OCI-LY7 (cell line): ENCODE measurements at regions of chr15 and their contacts with region 1.

Region 1: GRCh38 chr15:84588053-84588874 is 12.5 kb upstream of the ZSCAN2 start:
- DNase-seq: peak; percentile 88
- H3K4me3 ChIP-seq: peak overlapping the region; percentile 24
- H3K27ac ChIP-seq: no peak overlapping the region
- H3K4me1 ChIP-seq: peaks cover 2% of the 10 kb centered on the region
- CTCF ChIP-seq: peak; percentile 79

Region 2: DNA sequence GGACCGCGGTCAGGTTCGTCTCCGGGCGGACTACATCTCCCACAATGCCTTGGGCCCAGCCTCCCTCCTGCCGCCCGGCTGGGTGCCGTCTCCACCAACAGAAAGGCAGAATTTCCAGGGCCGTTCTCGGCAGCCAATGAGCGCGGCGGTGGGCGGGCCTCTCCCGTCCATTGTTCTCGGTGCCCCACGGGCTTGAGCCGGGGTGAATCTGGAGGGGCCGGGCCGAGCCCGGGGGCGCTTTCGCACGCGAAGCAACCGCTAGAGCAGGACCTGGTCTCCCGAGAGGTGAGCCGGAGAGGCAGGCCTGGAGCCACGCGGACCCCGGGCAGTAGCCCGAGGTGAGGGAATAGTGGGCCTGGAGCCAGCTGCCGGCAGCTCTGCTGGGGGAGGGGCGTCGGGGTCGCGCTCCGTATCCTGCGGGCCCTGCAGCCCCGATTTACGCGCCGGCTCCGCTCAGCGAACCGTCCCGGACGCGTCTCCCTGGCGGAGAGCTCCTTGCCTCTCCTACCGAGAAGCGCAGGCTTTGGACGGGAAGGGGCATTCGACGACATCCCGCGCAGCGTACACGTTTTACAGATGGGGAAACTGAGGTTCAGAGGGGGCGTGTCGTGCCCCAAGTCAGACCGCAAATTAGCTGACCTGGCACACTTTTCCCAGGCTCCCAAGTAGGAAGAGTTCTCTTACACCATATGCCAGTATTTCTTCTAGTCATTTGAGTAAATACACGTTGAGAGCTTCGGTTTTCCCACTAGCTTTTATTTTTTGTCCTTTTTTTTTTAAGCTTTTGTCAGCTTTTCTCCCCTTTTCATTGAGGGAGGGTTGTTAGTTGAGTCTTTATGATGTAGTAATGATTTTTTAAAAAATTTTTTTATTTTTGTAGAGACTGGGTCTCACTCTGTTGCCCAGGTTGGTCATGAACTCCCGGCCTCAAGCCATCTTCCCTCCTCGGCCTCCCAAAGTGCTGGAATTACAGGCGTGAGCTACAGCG is 12.9 kb after region 1 on chr15 and contains the start of gene ZSCAN2:
- CTCF ChIA-PET with region 1: interaction called, 12 read pairs
- POLR2A ChIA-PET with region 1: no interaction called
- intact Hi-C with region 1: no loop called
- DNase-seq: peak; percentile 93
- H3K4me3 ChIP-seq: peak within 1 kb of the TSS; percentile 83
- H3K27ac ChIP-seq: no peak within 1 kb of the TSS
- H3K4me1 ChIP-seq: peaks cover 47% of the 10 kb centered on the region
- CTCF ChIP-seq: no peak
- total RNA-seq, gene ZSCAN2: 12.4 and 21.7 TPM in 2 replicates

Region 3: DNA sequence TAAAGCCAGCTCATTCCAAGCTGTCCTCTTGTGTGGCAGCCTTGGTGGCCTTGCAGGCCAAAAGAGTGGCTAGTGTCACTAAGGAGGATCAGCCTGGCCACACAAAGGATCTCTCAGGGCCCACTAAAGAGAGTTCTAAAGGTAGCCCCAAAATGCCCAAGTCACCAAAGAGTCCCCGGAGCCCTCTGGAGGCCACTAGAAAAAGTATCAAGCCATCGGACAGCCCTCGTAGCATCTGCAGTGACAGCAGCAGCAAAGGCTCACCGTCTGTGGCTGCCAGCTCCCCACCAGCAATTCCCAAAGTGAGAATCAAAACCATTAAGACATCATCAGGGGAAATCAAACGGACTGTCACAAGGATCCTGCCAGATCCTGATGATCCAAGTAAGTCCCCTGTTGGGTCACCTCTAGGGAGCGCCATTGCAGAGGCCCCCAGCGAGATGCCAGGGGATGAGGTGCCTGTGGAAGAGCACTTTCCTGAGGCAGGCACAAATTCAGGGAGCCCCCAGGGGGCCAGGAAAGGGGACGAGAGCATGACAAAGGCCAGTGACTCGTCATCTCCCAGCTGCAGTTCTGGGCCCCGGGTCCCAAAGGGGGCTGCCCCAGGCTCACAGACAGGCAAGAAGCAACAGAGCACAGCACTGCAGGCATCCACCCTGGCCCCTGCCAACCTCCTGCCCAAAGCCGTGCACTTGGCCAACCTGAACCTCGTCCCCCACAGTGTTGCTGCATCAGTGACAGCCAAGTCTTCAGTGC is 195.4 kb after region 1 on chr15:
- CTCF ChIA-PET with region 1: no interaction called
- POLR2A ChIA-PET with region 1: no interaction called
- intact Hi-C with region 1: no loop called
- DNase-seq: no peak
- H3K4me3 ChIP-seq: no peak overlapping the region
- H3K27ac ChIP-seq: no peak overlapping the region
- H3K4me1 ChIP-seq: no peaks in the 10 kb centered on the region
- CTCF ChIP-seq: peak; percentile 40; the same call in 1 of the 2 replicates

Region 4: DNA sequence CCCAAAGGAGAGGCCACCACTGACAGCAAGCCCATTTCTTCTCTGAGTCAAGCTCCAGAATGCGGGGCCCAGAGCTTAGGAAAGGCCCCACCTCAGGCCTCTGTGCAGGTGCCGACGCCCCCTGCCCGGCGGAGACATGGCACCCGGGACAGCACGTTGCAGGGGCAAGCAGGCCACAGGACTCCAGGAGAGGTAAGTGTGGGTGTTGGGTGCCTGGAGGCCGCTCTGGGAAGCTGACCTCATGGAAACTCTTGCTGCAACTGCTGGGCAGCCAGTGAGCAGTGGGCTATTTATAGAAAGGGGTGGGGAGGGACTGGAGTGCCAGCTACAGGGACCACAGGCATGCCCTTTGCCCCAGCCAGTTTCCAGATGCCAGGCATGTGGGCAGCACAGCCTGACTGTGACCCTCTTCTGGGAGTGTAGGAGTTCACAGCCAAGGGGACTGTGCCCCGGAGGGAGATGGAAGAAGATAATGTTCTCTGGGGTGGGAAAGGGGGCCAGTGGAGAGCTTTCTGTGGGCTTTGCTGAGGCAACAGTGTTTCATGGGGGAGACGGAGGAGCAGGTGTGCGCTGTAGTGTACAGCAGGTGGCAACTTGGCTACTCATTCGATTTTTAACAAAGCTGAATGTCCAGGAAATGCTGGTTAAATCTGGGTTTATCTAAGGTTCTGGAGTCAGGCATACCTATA is 252.6 kb after region 1 on chr15:
- CTCF ChIA-PET with region 1: interaction called, 3 read pairs
- POLR2A ChIA-PET with region 1: no interaction called
- intact Hi-C with region 1: loop called (anchors 1 kb)
- DNase-seq: no peak
- H3K4me3 ChIP-seq: no peak overlapping the region
- H3K27ac ChIP-seq: no peak overlapping the region
- H3K4me1 ChIP-seq: no peaks in the 10 kb centered on the region
- CTCF ChIP-seq: no peak

Region 5: DNA sequence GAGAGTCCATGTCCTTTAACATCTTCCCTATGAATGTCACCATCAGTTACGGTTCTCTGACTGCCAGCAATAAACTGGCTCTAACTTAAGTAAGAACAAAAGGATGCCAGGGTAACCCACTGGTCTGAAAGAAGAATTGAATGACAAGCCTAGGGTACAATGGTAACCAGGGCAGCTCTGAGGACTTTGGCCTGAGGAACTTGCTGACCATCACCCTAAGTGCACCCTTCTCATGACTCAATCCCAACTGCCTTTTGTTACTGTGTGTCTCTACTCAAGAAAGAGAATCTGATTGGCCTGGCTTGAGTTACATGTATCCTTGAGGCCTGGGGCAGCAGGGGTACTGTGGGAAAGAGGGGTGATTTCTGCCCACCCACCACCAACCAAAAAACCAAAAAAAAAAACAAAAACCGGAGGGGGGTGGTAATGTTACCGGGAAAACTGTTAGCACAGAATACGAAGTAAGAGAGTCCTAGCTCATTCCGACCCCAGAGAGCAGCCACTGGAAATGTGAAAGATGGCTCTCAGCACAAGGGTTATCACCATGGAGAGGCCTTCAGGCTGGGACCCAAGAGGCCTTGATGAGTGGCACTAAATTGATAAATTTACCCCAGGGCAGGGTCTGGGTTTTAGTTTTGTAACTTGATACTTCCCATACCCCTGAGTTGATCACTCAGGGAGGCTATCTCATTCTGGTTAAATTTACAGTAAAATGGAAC is 286.9 kb after region 1 on chr15:
- CTCF ChIA-PET with region 1: no interaction called
- POLR2A ChIA-PET with region 1: interaction called, 3 read pairs
- intact Hi-C with region 1: loop called (anchors 2 kb)
- DNase-seq: no peak
- H3K4me3 ChIP-seq: no peak overlapping the region
- H3K27ac ChIP-seq: no peak overlapping the region
- H3K4me1 ChIP-seq: no peaks in the 10 kb centered on the region
- CTCF ChIP-seq: no peak

Region 6: DNA sequence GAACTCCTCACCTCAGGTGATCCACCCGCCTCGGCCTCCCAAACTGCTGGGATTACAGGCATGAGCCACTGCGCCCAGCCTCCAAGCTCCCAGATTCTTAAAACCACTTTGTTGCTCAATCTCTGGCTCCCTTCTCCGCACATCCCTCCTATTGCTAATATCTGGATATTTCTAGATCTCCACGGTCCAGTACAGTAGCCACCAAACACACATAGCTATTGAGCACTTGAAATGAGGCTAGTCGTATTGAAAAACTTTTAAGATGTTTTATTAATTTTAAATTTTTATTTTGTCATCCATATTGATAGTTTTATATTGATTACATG is 340.5 kb after region 1 on chr15:
- CTCF ChIA-PET with region 1: no interaction called
- POLR2A ChIA-PET with region 1: interaction called, 3 read pairs
- intact Hi-C with region 1: loop called (anchors 1 kb)
- DNase-seq: no peak
- H3K4me3 ChIP-seq: no peak overlapping the region
- H3K27ac ChIP-seq: no peak overlapping the region
- H3K4me1 ChIP-seq: peaks cover 5% of the 10 kb centered on the region
- CTCF ChIP-seq: no peak

Region 7: DNA sequence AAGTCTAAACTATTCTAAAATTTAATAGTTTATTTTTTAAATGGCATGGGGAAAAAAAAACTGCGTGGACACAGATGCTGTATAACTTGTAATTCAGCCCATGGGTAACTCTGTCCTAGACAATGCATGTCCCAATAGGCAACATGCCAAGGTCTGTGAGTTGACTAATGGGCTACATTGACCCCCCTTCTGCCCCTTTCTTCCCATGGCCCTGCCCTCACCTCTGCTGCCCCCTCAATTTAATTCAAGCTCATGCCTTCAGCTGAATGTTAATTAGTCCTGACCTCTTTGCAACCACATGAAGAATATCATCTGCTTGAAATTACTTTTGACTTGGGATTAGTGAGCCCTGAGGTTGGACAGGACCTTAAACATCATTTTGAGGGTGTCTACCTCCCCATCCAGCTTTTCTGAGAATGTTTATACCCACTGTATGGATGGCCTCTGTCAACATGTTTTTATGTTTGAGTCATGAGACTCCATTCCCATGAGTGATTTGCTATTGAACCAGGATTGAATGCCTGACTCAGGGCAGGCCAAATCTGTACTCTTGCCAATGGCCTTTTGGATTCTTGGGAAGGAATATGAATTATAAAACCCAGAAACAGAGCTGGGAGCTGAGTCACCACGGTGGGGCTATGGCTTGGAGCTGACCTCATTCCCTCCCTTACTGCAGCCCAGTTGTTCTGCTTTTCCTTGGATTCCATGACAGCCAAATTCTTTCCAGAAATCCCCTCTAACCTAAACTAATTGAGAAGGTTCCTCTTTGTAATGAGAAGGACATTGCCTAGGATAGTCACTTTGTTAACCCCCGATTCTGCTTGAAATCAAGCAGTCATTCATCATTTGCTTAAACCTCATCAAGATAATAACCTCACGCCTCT is 359.9 kb after region 1 on chr15:
- CTCF ChIA-PET with region 1: no interaction called
- POLR2A ChIA-PET with region 1: no interaction called
- intact Hi-C with region 1: no loop called
- DNase-seq: no peak
- H3K4me3 ChIP-seq: no peak overlapping the region
- H3K27ac ChIP-seq: no peak overlapping the region
- H3K4me1 ChIP-seq: no peaks in the 10 kb centered on the region
- CTCF ChIP-seq: no peak

Region 8: GRCh38 chr15:85044251-85044853 is 456.1 kb after region 1 on chr15:
- CTCF ChIA-PET with region 1: no interaction called
- POLR2A ChIA-PET with region 1: no interaction called
- intact Hi-C with region 1: loop called (anchors 5 kb)
- DNase-seq: peak; percentile 48
- H3K4me3 ChIP-seq: no peak overlapping the region
- H3K27ac ChIP-seq: no peak overlapping the region
- H3K4me1 ChIP-seq: no peaks in the 10 kb centered on the region
- CTCF ChIP-seq: peak; percentile 76

Region 9: DNA sequence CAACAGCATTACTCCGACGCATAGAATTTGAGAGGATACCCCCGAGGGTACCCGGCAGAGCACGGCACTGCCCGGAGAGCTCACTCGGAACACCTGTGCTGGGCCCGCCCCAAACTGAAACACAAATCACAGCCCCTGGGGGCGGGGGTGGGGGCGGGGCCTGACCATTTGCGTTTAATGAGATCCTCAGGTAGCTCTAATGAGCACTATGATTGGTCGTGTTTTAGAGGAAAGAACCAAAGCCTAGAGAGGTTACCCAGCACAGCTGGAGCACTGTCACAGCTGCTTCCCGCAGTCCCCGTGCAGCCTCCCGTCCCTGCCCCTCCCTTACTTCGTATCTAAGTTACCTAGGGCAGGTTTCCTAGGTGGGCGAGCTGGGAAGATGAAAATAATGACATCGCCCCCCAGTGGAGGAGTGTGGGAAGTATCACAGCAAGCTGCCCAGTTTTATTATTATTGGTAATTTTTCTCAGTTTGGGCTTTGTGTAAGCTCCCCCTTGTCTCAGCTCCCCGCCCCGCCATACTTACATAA is 580.4 kb after region 1 on chr15:
- CTCF ChIA-PET with region 1: no interaction called
- POLR2A ChIA-PET with region 1: no interaction called
- intact Hi-C with region 1: loop called (anchors 10 kb)
- DNase-seq: peak; percentile 47
- H3K4me3 ChIP-seq: no peak overlapping the region
- H3K27ac ChIP-seq: no peak overlapping the region
- H3K4me1 ChIP-seq: no peaks in the 10 kb centered on the region
- CTCF ChIP-seq: peak; percentile 79